Right lobe of liver (tissue), 6 donors: ENCODE measurements at regions of chr22 and their contacts with region 1.

Region 1: GRCh38 chr22:26669060-26669481 is 11.7 kb downstream of the MIAT start:
- DNase-seq: no peak
- ATAC-seq: no peak
- H3K4me3 ChIP-seq: no peak overlapping the region
- H3K27ac ChIP-seq: no peak overlapping the region
- H3K4me1 ChIP-seq: peaks cover 0 to 8% (median 2%) of the 10 kb centered on the region in 4 donors
- H3K27me3 ChIP-seq: no peaks in the 10 kb centered on the region
- CTCF ChIP-seq: peak; percentile 18 to 31 (median 24)
- POLR2A ChIP-seq: no peak

Region 2: GRCh38 chr22:26364066-26365015 is 304.7 kb before region 1 on chr22:
- intact Hi-C with region 1: loop called in 1 of 2 experiments (anchors 10 kb)
- DNase-seq: peak; percentile 55 to 61 (median 59)
- ATAC-seq: peak; percentile 94 to 98 (median 98)
- H3K4me3 ChIP-seq: no peak overlapping the region
- H3K27ac ChIP-seq: no peak overlapping the region
- H3K4me1 ChIP-seq: peaks cover 0 to 4% (median 0%) of the 10 kb centered on the region in 4 donors
- H3K27me3 ChIP-seq: peaks cover 0 to 3% of the 10 kb centered on the region in 2 donors
- CTCF ChIP-seq: peak; percentile 57 to 72 (median 70)
- POLR2A ChIP-seq: no peak

Region 3: DNA sequence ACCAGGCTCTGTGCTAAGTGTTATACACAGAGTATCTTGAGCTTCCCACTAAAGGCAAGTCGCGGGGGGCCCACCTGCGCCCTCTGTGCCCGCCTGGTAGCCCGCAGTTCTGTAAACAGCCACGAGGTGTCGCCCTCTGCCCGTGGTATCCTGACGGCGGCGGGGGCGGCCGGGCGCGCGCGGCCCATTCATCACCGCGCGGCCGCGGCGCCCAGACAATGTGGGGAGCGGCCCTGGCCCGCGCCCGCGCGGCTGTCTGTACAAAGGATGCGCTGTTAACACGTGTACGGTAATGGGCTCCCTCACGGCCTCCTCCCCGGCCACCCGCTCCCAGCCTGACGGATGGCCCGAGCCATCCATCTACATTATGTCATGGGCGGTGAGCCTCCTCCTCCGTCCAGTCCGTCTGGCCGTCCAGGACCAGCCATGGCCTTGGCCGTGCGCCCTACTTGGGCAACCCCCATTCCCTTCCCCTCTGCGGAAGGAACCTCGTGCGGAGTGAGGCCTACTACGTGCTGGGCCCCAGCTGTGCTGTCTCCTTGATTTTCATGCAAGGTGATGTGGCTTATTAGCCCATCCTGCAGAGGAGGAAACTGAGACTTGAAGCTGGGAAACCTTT is 87.7 kb after region 1 on chr22:
- intact Hi-C with region 1: no loop called
- DNase-seq: peak in 2 of 3 donors; percentile 51 to 54
- ATAC-seq: peak; percentile 70 to 91 (median 84)
- H3K4me3 ChIP-seq: no peak overlapping the region
- H3K27ac ChIP-seq: no peak overlapping the region
- H3K4me1 ChIP-seq: no peaks in the 10 kb centered on the region
- H3K27me3 ChIP-seq: no peaks in the 10 kb centered on the region
- CTCF ChIP-seq: peak; percentile 66 to 93 (median 82)
- POLR2A ChIP-seq: no peak